T-cell (primary cell): ENCODE measurements at regions of chr3 and their contacts with region 1.

Region 1: DNA sequence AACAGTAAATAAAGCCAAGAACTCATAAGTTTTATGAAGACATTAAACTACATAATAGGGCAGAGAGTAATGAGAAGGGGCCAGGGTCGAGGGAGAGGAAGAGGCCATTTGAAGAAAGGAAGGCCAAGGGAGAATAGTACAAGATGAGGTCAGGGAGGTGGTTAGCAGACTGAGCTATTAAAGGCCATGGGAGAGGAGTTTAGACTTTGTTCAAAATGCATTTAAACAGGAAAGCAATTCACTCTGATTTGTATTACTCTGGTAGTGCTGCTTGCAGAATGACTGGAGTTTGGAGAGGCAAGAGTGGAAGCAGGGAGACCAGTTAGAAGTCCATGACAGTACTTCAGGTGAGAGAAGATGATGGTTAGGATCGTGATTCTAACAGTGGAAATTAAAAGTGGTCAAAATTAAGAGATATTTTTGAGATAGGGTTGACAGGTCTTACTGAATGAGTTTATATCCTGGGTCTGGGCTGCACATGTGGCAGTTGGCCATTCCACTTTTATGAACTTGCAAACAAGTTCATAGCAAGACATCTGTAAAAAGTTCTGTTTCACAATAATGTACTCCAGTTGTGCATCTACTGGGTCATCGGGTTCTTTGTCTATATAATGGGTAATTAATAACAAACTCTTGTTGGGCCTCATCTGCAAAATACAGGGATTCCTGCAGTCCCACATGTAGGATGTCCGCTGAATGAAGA is 16.3 kb downstream of the PPP2R3A start:
- DNase-seq: no peak
- ATAC-seq: no peak
- H3K4me3 ChIP-seq: no peak overlapping the region
- H3K4me3 Mint-ChIP-seq: no peak overlapping the region
- H3K27ac ChIP-seq: no peak overlapping the region
- H3K27ac Mint-ChIP-seq: no peak overlapping the region
- H3K4me1 ChIP-seq: no peaks in the 10 kb centered on the region
- H3K4me1 Mint-ChIP-seq: no peaks in the 10 kb centered on the region
- H3K27me3 ChIP-seq: no peaks in the 10 kb centered on the region
- H3K27me3 Mint-ChIP-seq: peaks cover 9 to 18% of the 10 kb centered on the region in 2 donors

Region 2: DNA sequence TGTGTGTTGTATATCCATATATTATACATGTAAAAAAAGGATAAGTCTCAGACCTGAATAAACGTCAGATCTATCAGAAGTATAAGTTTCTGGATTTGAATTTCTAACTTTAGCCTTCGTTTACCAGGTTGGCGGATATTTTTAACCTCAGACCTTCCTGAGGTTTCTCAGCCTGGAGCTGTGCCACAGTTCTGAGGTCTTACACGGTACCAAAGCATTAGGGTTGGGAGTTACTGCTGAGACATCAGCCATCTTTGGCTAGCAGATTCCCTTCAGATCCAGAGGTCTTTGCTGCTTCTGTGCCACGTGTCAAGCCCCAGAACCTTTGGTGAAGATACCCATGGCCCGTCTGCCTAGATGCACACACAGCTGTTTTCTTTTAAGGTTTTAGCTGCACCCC is 68.4 kb after region 1 on chr3:
- CTCF ChIA-PET with region 1: interaction called in 1 of 2 experiments, 10 read pairs
- POLR2A ChIA-PET with region 1: no interaction called
- DNase-seq: no peak
- ATAC-seq: no peak
- H3K4me3 ChIP-seq: no peak overlapping the region
- H3K4me3 Mint-ChIP-seq: no peak overlapping the region
- H3K27ac ChIP-seq: no peak overlapping the region
- H3K27ac Mint-ChIP-seq: no peak overlapping the region
- H3K4me1 ChIP-seq: no peaks in the 10 kb centered on the region
- H3K4me1 Mint-ChIP-seq: no peaks in the 10 kb centered on the region
- H3K27me3 ChIP-seq: peaks cover 0 to 7% of the 10 kb centered on the region in 2 experiments
- H3K27me3 Mint-ChIP-seq: peaks cover 14 to 21% of the 10 kb centered on the region in 2 donors